ENCODE measurements at regions of chr10 and their contacts with region 1.

Region 1: DNA sequence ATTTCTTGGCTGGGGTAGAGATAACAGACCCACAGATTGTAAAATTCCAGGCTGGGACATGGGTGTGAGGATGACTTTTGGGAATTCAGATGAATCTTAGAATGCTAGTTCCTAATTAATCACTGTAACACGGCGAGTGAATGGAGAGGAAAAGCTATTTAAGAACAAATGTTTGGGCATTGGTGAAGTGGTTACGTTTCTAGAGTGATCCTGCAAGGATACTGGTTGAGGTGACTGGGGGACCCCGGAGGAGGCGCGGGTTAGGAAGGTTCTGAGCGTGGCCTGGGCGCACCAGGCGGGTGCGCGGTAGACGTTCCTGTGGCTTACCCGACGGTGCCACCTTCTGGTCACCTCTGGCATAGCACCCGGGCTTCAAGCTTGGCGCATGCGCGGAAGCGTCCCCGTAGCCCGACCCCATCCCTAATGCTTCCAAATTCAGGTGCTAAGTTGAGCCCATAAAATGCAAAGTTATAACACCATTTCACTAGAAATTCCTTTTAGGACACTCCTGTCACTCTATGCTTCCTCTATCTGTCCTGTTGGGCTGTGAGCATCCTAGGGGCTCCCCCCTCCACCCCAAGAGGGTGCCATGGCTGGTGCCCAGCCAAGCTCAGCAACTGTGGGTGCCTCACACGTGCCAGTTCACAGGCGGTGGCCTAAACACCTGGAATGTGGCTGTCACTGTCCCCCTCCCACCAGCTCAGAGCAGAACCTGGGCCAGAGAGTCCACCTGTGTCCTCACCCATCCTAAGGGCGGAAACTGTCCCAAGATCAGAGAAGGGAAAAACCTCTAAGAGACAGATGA is 104.5 kb downstream of the PTPRE start:
- DNase-seq: peak; percentile 57 to 95 (median 84)
- ATAC-seq: peak; percentile 84 to 98 (median 94)
- H3K4me3 ChIP-seq: no peak overlapping the region
- H3K27ac ChIP-seq: no peak overlapping the region
- H3K4me1 ChIP-seq: peaks cover 0 to 4% (median 0%) of the 10 kb centered on the region in 3 donors
- H3K27me3 ChIP-seq: no peaks in the 10 kb centered on the region
- CTCF ChIP-seq: peak; percentile 97 to 99 (median 97)

Region 2: DNA sequence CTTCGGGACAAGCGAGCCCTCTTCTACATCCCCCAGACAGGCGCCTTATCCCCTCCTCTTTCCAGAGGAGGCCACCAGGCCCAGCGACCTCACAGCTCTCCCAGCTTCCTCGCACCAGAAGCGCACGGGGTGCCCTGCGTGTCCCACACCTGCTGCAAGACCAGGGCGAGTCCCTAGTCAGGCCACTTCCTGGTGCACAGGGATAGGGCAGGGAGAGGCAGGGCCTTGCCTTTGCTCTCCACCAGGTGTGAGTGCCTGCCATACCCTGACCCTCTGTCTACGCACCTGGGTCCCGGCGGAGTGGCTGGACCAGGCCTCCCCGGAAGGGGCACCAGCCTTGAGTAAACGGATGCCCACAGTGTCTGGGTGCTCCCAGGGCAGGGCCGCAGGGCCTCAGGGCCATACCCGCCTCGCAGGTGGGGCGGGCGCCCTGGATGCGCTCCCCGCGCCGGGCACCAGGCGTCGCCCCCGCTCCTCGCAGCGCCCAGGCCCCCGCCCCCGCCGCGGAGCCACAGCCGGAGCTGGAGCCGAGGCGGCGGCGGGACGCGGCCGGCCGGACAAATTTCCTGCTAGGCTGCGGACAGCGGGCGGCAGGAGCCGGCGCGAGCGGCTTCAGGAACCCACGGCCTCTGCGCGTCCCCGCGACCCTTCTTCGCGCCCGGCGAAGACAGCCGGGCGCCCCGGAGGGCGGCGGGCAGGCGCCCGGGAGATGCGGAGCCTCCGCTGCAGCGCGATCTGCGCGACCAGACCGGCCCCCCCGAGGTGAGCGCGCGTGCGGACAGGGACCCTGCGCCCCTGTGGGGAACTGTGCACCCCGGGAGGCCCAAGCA is 104.6 kb before region 1 on chr10 and contains the start of gene PTPRE:
- intact Hi-C with region 1: loop called in 2 of 3 experiments (anchors 5 kb)
- DNase-seq: peak; percentile 36 to 89 (median 64)
- ATAC-seq: peak; percentile 93 to 98 (median 96)
- H3K4me3 ChIP-seq: peak within 1 kb of the TSS; percentile 24 to 64 (median 40)
- H3K27ac ChIP-seq: peak within 1 kb of the TSS in 2 of 4 donors; percentile 33 to 60
- H3K4me1 ChIP-seq: peaks cover 0 to 6% (median 3%) of the 10 kb centered on the region in 3 donors
- H3K27me3 ChIP-seq: peaks cover 0 to 9% (median 0%) of the 10 kb centered on the region in 4 donors
- CTCF ChIP-seq: peak; percentile 24 to 62 (median 52)
- total RNA-seq, gene PTPRE: 1.0 to 7.1 (median 3.7) TPM

Region 3: GRCh38 chr10:128440513-128441160 is 429.3 kb after region 1 on chr10:
- intact Hi-C with region 1: no loop called
- DNase-seq: no peak
- ATAC-seq: no peak
- H3K4me3 ChIP-seq: no peak overlapping the region
- H3K27ac ChIP-seq: no peak overlapping the region
- H3K4me1 ChIP-seq: no peaks in the 10 kb centered on the region
- H3K27me3 ChIP-seq: peaks cover 0 to 10% (median 2%) of the 10 kb centered on the region in 4 donors
- CTCF ChIP-seq: no peak

Measured in pancreas (tissue), 10 donors.